ENCODE measurements at regions of chr13 and their contacts with region 1.

Region 1: GRCh38 chr13:30737511-30738337 is 2.4 kb downstream of the ALOX5AP start:
- DNase-seq: peak; percentile 62 to 93 (median 92)
- H3K4me3 ChIP-seq: peak overlapping the region in 4 of 7 experiments; percentile 6 to 85 (median 24)
- H3K27ac ChIP-seq: no peak overlapping the region
- H3K4me1 ChIP-seq: peaks cover 46 to 71% (median 62%) of the 10 kb centered on the region in 4 experiments
- H3K27me3 ChIP-seq: no peaks in the 10 kb centered on the region

Region 2: GRCh38 chr13:30720172-30720869 is 17.4 kb before region 1 on chr13:
- CTCF ChIA-PET with region 1: interaction called, 13 read pairs
- POLR2A ChIA-PET with region 1: interaction called, 5 read pairs
- DNase-seq: peak; percentile 50 to 92 (median 88)
- H3K4me3 ChIP-seq: peak overlapping the region in 1 of 7 experiments; percentile 24
- H3K27ac ChIP-seq: no peak overlapping the region
- H3K4me1 ChIP-seq: peaks cover 11 to 27% (median 25%) of the 10 kb centered on the region in 4 experiments
- H3K27me3 ChIP-seq: no peaks in the 10 kb centered on the region

Region 3: GRCh38 chr13:30972832-30973377 is 235.2 kb after region 1 on chr13:
- CTCF ChIA-PET with region 1: no interaction called
- POLR2A ChIA-PET with region 1: no interaction called
- DNase-seq: no peak
- H3K4me3 ChIP-seq: no peak overlapping the region
- H3K27ac ChIP-seq: no peak overlapping the region
- H3K4me1 ChIP-seq: no peaks in the 10 kb centered on the region
- H3K27me3 ChIP-seq: peaks cover 0 to 21% (median 3%) of the 10 kb centered on the region in 5 experiments

Region 4: DNA sequence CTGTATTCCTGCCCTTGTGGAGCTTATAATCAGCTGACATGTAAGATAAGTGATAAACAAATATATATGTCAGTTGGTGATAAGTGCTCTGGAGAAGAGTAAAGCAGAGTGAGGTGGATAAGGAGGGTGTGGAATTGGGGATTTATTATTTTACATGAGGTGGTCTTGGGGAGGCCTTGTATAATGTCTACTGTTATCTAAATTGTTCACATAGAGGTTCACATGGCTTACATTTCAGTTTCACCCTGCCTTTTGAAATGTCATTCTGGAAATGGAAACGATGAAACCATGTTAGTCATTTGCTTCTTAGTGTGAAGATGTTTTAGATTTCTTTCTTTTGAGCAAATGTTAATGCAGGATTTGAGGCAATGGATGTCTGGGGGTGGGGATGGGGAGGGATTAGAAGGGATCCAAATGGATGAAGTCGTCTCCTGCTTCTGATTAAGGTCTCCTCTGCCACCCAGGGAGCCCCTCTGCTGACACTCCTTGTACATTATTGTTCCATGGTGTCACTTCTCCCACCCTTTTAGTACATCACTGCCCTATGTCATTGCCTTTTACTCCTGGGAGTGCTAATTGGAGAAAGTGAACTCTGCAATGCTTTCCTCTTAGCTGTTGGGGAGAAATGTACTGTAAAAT is 476.0 kb after region 1 on chr13:
- CTCF ChIA-PET with region 1: no interaction called
- POLR2A ChIA-PET with region 1: no interaction called
- DNase-seq: no peak
- H3K4me3 ChIP-seq: no peak overlapping the region
- H3K27ac ChIP-seq: no peak overlapping the region
- H3K4me1 ChIP-seq: peaks cover 0 to 19% (median 10%) of the 10 kb centered on the region in 4 experiments
- H3K27me3 ChIP-seq: no peaks in the 10 kb centered on the region